Tibial artery (tissue), 4 donors: ENCODE measurements at regions of chr4 and their contacts with region 1.

Region 1: GRCh38 chr4:86497980-86498862 is 95.9 kb upstream of the PTPN13 start:
- DNase-seq: no peak
- H3K4me3 ChIP-seq: no peak overlapping the region
- H3K27ac ChIP-seq: no peak overlapping the region
- H3K4me1 ChIP-seq: peaks cover 0 to 8% (median 0%) of the 10 kb centered on the region in 4 donors
- H3K27me3 ChIP-seq: no peaks in the 10 kb centered on the region
- CTCF ChIP-seq: peak; percentile 71 to 80

Region 2: DNA sequence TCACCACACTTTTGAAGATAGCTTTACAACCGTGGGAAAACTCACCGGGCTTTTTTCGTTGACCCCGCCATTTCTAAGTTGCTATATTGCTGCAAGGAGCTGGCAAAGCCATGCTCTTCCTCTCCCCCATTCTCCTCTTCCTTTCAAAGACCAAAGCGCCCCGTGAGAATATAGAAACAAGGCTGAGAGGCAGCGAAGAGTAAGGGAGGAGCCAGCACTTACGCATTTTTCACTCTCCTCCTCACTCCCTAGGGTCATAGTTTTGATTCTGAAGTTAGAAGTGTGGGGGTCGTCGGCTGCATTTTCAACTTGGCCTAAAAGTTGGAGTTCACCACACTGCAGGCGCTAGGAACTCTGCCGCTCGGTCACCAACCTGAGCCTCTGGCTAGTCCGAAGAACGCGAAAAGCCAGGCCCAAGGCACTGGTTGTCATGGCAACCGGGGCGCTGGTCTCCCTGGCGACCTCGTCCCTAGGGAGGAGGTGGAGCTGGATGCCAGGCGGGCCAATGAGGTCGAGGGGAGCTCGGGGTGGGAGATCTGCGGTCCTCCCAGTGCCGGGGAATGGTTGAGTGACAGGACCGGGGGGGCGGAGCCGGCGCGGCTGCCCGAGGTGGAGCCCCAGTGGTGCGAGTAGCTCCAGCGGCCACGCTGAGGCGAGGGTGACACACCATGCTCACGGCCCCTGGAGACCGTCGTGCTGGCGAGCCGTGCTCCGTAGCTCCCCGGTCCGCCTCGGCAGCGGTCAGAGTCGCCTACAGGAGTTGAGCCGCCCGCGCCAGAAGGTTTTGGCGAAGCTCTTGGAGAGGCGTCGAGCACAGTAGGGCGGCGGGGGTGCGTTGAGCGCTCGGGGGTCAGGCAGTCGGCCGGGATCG is 95.7 kb after region 1 on chr4 and contains the start of gene PTPN13:
- intact Hi-C with region 1: loop called (anchors 5 kb)
- DNase-seq: peak; percentile 98 to 99
- H3K4me3 ChIP-seq: peak within 1 kb of the TSS; percentile 71 to 84
- H3K27ac ChIP-seq: peak within 1 kb of the TSS; percentile 84 to 90
- H3K4me1 ChIP-seq: peaks cover 0 to 36% (median 5%) of the 10 kb centered on the region in 4 donors
- H3K27me3 ChIP-seq: no peaks in the 10 kb centered on the region
- CTCF ChIP-seq: no peak

Region 3: GRCh38 chr4:86757468-86757867 is 259.2 kb after region 1 on chr4:
- intact Hi-C with region 1: loop called (anchors 10 kb)
- DNase-seq: no peak
- H3K4me3 ChIP-seq: no peak overlapping the region
- H3K27ac ChIP-seq: no peak overlapping the region
- H3K4me1 ChIP-seq: no peaks in the 10 kb centered on the region
- H3K27me3 ChIP-seq: no peaks in the 10 kb centered on the region
- CTCF ChIP-seq: no peak

Region 4: DNA sequence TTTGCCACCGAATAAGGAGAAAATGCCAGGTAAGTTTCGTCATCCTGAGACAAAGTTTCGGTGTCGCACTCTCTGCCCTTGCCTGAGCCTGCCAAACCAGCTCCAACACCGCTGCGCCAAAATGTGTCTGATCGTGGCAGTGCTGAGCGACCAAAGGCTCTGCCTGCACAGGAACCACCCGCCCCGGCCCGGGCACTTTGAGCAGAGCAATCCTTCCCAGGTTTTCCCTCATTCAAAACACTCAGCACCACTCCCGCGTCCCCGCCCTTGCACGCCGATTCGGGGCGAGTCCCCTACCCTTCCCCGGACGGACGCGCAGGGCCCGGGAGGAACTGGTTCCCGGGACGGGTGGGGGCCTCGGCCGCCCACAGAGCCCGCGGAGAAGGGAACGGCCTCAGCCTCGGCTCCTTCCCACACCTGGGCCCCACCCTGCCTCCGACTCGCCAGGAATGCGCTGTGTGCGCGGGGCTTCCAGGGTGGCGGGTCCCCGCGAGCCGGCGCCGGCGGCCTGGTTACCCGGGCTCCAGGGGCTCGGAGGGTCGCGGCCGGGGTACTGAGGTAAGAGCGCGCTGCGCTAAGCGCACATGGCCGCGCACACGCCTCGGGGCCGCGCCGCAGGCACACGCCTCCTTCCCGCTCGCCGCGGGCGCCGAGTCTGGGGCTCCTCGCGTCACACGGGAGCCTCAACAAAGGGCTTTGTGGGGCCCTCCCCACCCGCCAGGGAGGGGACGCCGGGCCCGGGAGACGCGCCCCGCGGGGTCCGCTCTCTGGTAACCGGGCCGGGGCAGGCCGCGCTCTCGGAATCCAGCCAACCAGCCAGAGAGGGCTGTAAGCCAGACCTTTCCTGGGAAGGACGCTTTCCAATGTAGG is 393.8 kb after region 1 on chr4 and contains the start of gene C4orf36:
- intact Hi-C with region 1: loop called (anchors 2 kb)
- DNase-seq: peak; percentile 37 to 72
- H3K4me3 ChIP-seq: peak within 1 kb of the TSS; percentile 55 to 63
- H3K27ac ChIP-seq: peak within 1 kb of the TSS; percentile 43 to 47
- H3K4me1 ChIP-seq: peaks cover 0 to 17% (median 3%) of the 10 kb centered on the region in 4 donors
- H3K27me3 ChIP-seq: no peaks in the 10 kb centered on the region
- CTCF ChIP-seq: no peak